ENCODE measurements at regions of chr16 and their contacts with region 1.

Region 1: GRCh38 chr16:18789850-18790724 is at the start of gene RPS15A:
- DNase-seq: peak; percentile 95 to 97
- ATAC-seq: peak; percentile 99
- H3K4me3 ChIP-seq: peak within 1 kb of the TSS; percentile 46 to 58
- H3K27ac ChIP-seq: peak within 1 kb of the TSS; percentile 55 to 71
- H3K4me1 ChIP-seq: peaks cover 0 to 12% of the 10 kb centered on the region in 2 donors
- H3K27me3 ChIP-seq: no peaks in the 10 kb centered on the region
- total RNA-seq, gene RPS15A: 879 to 1,023 TPM

Region 2: GRCh38 chr16:17296431-17296830 is 1493.7 kb before region 1 on chr16:
- intact Hi-C with region 1: loop called in 1 of 2 experiments (anchors 10 kb)
- DNase-seq: no peak
- ATAC-seq: no peak
- H3K4me3 ChIP-seq: no peak overlapping the region
- H3K27ac ChIP-seq: no peak overlapping the region
- H3K4me1 ChIP-seq: peaks cover 0 to 8% of the 10 kb centered on the region in 2 donors
- H3K27me3 ChIP-seq: no peaks in the 10 kb centered on the region

Region 3: GRCh38 chr16:18853694-18854093 is 63.6 kb after region 1 on chr16:
- intact Hi-C with region 1: no loop called
- DNase-seq: no peak
- ATAC-seq: no peak
- H3K4me3 ChIP-seq: no peak overlapping the region
- H3K27ac ChIP-seq: no peak overlapping the region
- H3K4me1 ChIP-seq: no peaks in the 10 kb centered on the region
- H3K27me3 ChIP-seq: no peaks in the 10 kb centered on the region